ENCODE measurements at regions of chr9 and their contacts with region 1.

Region 1: GRCh38 chr9:111621895-111622480 is 9.1 kb upstream of the DNAJC25 start:
- H3K4me3 Mint-ChIP-seq: no peak overlapping the region
- H3K27ac Mint-ChIP-seq: no peak overlapping the region
- H3K4me1 Mint-ChIP-seq: peaks cover 6% of the 10 kb centered on the region
- H3K27me3 Mint-ChIP-seq: peaks cover 6% of the 10 kb centered on the region

Region 2: DNA sequence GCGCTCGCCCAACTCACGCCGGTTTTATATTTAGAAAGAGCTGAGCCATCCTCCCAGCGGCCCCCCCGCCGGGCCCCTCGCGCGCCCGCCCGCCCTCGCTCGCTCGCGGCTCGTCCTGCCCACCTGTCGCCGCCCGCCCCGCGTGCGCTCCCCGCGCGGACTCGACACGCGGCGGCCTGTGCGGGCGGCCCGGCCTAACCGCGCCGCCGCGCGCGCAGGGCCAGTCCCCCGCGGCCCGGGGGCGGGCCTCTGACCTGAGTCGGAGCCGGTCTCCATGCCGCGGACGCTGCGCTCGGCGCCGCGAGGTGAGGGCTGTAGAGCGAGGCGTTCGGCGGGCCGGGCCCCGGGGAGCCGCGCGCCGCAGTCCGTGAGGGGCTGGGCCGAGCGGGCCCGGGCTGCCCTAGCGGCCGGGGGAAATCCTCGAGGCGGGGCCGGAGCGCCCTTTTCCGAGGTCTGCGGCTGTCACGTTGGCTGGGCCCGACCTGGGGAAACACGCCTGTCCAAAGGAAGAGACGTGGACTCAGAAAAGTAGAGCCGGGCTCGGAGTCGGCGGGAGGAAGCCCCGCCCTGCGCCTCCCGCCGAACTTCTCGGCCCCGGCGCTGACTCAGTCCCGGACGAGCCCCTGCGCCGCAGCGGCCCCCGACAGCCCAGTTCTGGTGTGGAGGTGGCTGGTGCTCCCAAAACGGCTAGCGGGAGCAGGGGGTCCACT is 138.0 kb before region 1 on chr9 and contains the start of gene ECPAS:
- intact Hi-C with region 1: loop called (anchors 10 kb)
- H3K4me3 Mint-ChIP-seq: peak within 1 kb of the TSS; percentile 91
- H3K27ac Mint-ChIP-seq: peak within 1 kb of the TSS; percentile 93
- H3K4me1 Mint-ChIP-seq: peaks cover 24% of the 10 kb centered on the region
- H3K27me3 Mint-ChIP-seq: peaks cover 6% of the 10 kb centered on the region

Region 3: DNA sequence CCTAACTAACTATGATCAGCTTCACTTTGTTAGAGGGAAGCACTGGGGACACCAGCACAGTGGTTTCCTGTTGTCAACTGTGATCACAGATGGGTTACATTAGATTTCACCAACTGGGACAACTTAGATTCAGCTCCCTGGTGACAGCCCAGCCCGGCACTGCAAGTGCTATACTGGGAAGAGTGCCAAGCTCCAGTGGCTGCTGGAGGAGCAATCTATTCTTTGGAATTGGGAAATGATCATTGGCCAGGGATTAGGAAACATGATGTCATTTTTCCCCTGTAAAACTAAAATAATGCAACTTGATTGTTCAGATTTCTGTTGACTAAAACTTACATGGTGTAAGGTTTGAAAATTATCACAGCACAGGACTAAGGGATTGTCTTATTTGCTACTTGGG is 55.8 kb before region 1 on chr9:
- intact Hi-C with region 1: no loop called
- H3K4me3 Mint-ChIP-seq: no peak overlapping the region
- H3K27ac Mint-ChIP-seq: no peak overlapping the region
- H3K4me1 Mint-ChIP-seq: no peaks in the 10 kb centered on the region
- H3K27me3 Mint-ChIP-seq: no peaks in the 10 kb centered on the region

Region 4: DNA sequence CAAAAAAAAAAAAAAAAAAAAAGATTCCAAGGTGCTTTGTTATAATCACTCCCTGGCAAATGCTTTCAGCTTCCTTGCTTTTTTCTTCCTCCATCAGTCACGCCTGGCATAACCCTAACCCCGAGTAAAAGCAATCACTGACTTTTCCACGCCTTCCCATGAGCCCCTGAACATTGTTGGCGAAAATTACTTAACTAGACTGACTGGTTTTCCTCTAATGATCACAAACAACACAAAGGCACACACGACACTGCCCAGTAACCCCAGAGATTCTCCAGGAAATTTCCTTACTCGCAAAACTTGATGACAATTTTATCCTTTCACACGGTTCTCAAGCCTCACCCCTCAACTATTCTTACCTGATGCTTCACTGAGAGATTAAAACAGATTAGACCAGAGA is 11.1 kb before region 1 on chr9:
- intact Hi-C with region 1: no loop called
- H3K4me3 Mint-ChIP-seq: no peak overlapping the region
- H3K27ac Mint-ChIP-seq: no peak overlapping the region
- H3K4me1 Mint-ChIP-seq: no peaks in the 10 kb centered on the region
- H3K27me3 Mint-ChIP-seq: peaks cover 48% of the 10 kb centered on the region

Region 5: DNA sequence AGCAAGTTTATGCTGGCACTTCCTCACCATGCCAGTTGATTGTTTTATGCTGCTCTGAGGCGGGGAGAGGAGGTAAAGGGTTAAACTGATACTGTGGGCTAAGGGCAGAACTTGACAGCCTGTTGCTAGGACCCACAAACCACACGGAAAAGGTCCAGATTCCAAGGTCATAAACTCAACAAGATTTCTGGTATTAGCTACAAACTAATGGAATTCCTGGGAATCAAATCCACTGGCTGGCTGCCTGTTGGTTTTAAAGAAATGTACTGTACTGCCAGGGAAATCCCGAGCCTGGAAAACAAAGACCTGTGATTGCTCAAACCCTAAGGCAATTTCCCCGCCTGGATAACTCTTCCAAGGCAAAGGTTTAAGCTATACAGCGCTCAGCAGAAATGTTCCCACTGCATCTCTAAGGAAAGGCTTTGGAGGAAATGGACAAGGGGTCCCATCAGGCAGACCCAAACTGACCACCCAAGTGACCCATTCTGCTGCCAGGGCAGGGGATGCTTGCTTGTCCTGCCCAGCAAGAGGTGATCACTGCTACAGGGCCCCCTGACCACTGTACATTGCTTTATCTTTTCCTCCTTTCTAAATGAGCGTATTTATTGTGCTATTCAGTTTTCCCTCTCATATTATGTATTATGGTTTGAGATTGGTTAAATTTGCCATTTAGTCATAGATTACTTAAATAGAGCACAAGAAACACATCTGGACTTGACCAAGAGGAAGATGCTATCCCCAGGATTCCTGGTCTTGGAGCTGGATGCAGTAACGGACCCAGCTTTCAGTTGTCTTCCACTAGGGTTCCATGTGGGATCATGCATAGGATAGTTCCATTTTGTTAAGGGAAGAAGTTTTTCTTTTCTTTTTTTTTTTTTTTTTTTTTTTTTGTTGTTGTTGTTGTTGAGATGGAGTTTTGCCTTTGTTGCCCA is 428.8 kb after region 1 on chr9:
- intact Hi-C with region 1: no loop called
- H3K4me3 Mint-ChIP-seq: no peak overlapping the region
- H3K27ac Mint-ChIP-seq: no peak overlapping the region
- H3K4me1 Mint-ChIP-seq: peaks cover 37% of the 10 kb centered on the region
- H3K27me3 Mint-ChIP-seq: no peaks in the 10 kb centered on the region